ENCODE measurements at regions of chr7 and their contacts with region 1.

Region 1: GRCh38 chr7:24819916-24820689 is 62.8 kb upstream of the GSDME start:
- DNase-seq: peak; percentile 95
- H3K4me3 ChIP-seq: peak overlapping the region; percentile 48
- H3K27ac ChIP-seq: peak overlapping the region; percentile 98
- H3K4me1 ChIP-seq: peaks cover 52% of the 10 kb centered on the region
- CTCF ChIP-seq: peak; percentile 97

Region 2: GRCh38 chr7:24836084-24836483 is 16.0 kb after region 1 on chr7:
- CTCF ChIA-PET with region 1: interaction called, 5 read pairs
- POLR2A ChIA-PET with region 1: interaction called, 34 read pairs
- intact Hi-C with region 1: loop called (anchors 1 kb)
- DNase-seq: peak; percentile 93
- H3K4me3 ChIP-seq: peak overlapping the region; percentile 34
- H3K27ac ChIP-seq: peak overlapping the region; percentile 95
- H3K4me1 ChIP-seq: peaks cover 89% of the 10 kb centered on the region
- CTCF ChIP-seq: no peak

Region 3: GRCh38 chr7:24847754-24848153 is 27.7 kb after region 1 on chr7:
- CTCF ChIA-PET with region 1: interaction called, 5 read pairs
- POLR2A ChIA-PET with region 1: interaction called, 16 read pairs
- intact Hi-C with region 1: loop called (anchors 1 kb)
- DNase-seq: no peak
- H3K4me3 ChIP-seq: no peak overlapping the region
- H3K27ac ChIP-seq: peak overlapping the region; percentile 92
- H3K4me1 ChIP-seq: peaks cover 59% of the 10 kb centered on the region
- CTCF ChIP-seq: no peak

Region 4: GRCh38 chr7:24863626-24864025 is 43.5 kb after region 1 on chr7:
- CTCF ChIA-PET with region 1: no interaction called
- POLR2A ChIA-PET with region 1: no interaction called
- intact Hi-C with region 1: no loop called
- DNase-seq: no peak
- H3K4me3 ChIP-seq: no peak overlapping the region
- H3K27ac ChIP-seq: no peak overlapping the region
- H3K4me1 ChIP-seq: peaks cover 10% of the 10 kb centered on the region
- CTCF ChIP-seq: no peak

Region 5: GRCh38 chr7:24896031-24896501 is 76.0 kb after region 1 on chr7:
- CTCF ChIA-PET with region 1: interaction called, 3 read pairs
- POLR2A ChIA-PET with region 1: interaction called, 14 read pairs
- intact Hi-C with region 1: loop called (anchors 1 kb)
- DNase-seq: peak; percentile 95
- H3K4me3 ChIP-seq: peak overlapping the region; percentile 33
- H3K27ac ChIP-seq: peak overlapping the region; percentile 93
- H3K4me1 ChIP-seq: peaks cover 98% of the 10 kb centered on the region
- CTCF ChIP-seq: peak; percentile 74

Region 6: GRCh38 chr7:25069900-25070443 is 249.9 kb after region 1 on chr7:
- CTCF ChIA-PET with region 1: no interaction called
- POLR2A ChIA-PET with region 1: interaction called, 4 read pairs
- intact Hi-C with region 1: loop called (anchors 1 kb)
- DNase-seq: peak; percentile 85
- H3K4me3 ChIP-seq: no peak overlapping the region
- H3K27ac ChIP-seq: no peak overlapping the region
- H3K4me1 ChIP-seq: peaks cover 32% of the 10 kb centered on the region
- CTCF ChIP-seq: peak; percentile 93

Measured in OCI-LY7 (cell line).